ENCODE measurements at regions of chr1 and their contacts with region 1.

Region 1: DNA sequence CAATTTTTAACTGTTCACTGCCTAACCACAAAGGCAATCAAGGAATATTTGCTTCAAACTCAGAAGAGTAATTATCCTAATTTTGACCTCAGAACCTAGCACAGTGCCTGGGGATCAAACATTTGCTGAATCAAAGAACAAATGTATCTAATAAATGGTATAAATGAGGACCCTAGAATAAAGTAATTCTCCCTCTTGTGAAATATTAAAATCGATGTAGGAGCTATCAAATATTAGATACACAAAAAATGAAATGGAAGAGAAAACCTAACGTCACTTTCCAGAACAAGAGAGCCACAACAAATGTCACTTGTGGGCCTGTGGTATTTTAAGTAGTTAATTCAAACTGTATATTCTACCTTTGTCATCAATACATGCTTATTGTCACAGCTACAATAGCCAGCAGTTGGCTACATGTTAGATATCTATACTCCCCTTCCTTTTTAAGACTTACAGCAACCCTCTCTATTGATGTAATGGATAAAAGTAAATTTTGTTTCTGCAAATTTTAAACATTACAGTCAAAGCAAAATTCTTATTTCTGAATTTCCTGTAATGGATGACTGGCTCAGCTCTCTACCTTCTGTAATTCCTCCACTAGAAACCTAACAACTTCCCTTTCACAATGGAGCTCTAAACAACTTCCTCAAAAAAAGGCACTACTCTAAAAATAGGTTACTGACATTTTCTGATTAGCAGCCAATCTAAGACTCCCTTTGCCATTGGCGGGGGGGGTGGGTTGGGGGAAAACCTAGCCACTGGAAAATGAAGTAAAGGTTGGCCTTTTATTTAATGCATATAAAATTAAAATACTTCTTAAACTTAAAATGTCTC is 37.6 kb downstream of the PUM1 start:
- DNase-seq: peak; percentile 49 to 79 (median 76)
- H3K4me3 ChIP-seq: peak overlapping the region in 1 of 3 experiments; percentile 44
- H3K4me3 Mint-ChIP-seq: peak overlapping the region; percentile 0 to 46
- H3K27ac ChIP-seq: peak overlapping the region in 1 of 2 donors; percentile 72
- H3K27ac Mint-ChIP-seq: peak overlapping the region; percentile 71 to 89 (median 86)
- H3K4me1 ChIP-seq: peaks cover 34 to 40% of the 10 kb centered on the region in 2 donors
- H3K4me1 Mint-ChIP-seq: peaks cover 62% of the 10 kb centered on the region
- H3K27me3 ChIP-seq: no peaks in the 10 kb centered on the region
- H3K27me3 Mint-ChIP-seq: no peaks in the 10 kb centered on the region
- CTCF ChIP-seq: no peak

Region 2: DNA sequence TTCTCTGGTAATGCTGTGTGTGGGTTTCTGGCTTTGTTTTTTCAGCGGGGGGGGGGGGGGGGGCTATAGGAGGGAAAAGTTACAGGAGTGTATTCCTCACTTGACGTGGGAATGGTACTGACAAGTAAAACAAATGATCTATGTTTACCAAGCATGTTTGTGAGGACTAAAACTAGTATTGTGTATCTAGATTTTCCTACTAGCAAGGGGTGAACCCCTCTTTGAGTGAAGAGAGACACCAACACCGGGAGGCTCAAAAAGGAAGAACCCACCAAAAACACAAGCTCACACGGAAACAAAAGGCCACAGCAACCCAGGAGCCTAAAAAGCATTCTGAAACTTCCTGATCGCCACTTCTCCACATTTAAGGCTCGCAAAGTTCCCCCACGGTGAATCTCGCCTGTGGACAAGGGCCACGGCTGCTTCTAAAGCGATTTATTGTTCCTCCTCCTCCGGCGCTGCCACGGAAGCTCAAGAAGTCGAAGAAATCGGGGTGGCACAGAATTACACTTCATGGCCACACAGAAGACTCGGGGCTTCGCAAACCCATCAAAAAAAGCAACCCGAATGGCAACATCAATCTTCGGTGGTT is 36.9 kb after region 1 on chr1:
- intact Hi-C with region 1: loop called in 1 of 2 experiments (anchors 5 kb)
- DNase-seq: peak; percentile 25 to 55 (median 53)
- H3K4me3 ChIP-seq: peak overlapping the region; percentile 71 to 99 (median 83)
- H3K4me3 Mint-ChIP-seq: peak overlapping the region; percentile 98 to 100
- H3K27ac ChIP-seq: peak overlapping the region; percentile 92 to 99
- H3K27ac Mint-ChIP-seq: peak overlapping the region; percentile 99 to 100 (median 99)
- H3K4me1 ChIP-seq: peaks cover 22 to 33% of the 10 kb centered on the region in 2 donors
- H3K4me1 Mint-ChIP-seq: peaks cover 25% of the 10 kb centered on the region
- H3K27me3 ChIP-seq: no peaks in the 10 kb centered on the region
- H3K27me3 Mint-ChIP-seq: peaks cover 0 to 2% (median 0%) of the 10 kb centered on the region in 3 donors
- CTCF ChIP-seq: no peak